RWPE1 (cell line): ENCODE measurements at regions of chr10 and their contacts with region 1.

Region 1: DNA sequence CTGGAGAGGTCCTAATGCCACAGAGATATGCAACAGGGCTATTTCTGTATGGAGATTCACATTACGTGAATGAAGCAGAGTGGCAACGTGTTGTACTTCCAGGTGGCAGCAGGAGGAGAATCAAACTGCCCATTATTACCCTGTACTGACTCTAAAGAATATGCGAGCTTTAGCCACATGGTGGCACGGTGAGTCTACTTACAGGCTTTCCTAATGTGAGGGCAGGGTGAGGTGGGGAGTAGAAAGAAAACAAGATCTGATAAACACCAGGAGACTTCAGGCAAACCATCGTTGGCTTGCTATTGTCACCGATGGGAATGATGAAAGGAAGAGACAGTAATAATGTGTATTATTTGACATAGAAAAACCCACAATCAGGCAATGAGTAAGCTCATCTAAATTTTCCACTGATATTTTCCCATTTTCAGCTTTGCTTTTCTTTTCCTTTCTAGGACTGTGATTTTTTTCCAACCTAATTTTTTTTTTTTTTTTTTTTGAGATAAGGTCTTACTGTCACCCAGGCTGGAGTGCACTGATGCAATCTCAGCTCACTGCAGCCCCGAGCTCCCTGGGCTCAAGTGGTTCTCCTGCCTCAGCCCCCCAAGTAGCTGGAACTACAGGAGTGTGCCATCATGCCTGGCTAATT is 164.3 kb downstream of the BTAF1 start:
- DNase-seq: peak; percentile 87
- H3K27ac ChIP-seq: no peak overlapping the region
- CTCF ChIP-seq: peak; percentile 87

Region 2: GRCh38 chr10:92278996-92279696 is 191.3 kb after region 1 on chr10:
- CTCF ChIA-PET with region 1: interaction called, 13 read pairs
- POLR2A ChIA-PET with region 1: no interaction called
- DNase-seq: no peak
- H3K27ac ChIP-seq: no peak overlapping the region
- CTCF ChIP-seq: no peak

Region 3: DNA sequence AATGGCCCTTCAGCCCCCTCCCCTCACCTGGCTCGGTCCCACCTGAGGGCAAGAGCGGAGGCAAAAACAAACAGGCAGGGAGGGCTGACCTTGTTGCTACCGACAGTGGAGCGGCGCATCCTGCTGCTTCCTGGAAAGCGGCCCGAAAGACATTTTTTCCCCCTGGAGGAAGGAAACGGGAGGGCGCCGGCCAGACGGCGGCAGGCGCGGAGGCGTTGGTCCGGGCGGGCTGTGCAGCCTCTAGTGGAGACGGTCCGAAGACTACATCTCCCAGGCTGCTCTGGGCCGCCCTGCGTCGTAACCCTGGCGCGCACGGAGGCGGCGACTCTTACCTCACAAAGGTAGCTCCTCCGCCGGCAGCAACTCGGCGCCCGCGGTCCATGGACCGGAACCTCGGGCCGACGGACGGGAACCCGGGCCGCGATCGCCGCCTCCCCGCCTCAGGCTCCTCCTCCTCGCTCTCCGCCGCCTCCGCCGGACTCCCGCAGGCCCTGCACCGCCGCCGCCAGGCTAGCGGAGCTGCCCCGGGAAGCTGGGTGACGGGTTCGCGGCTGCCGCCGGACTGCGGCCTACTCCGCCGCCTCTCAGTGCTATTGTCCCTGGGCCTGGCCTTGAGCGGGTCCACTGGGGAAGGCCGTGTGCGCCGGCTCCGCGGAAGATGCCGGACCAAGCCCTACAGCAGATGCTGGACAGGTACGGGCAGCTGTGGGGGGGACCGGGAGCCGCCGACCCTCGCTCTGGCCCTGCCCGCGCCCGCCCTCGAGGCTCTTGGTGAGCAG is 203.2 kb after region 1 on chr10 and contains the starts of genes CPEB3 and MARCHF5:
- CTCF ChIA-PET with region 1: interaction called, 15 read pairs
- POLR2A ChIA-PET with region 1: interaction called, 6 read pairs
- DNase-seq: peak; percentile 96
- H3K27ac ChIP-seq: peak within 1 kb of the TSS; percentile 86
- CTCF ChIP-seq: peak; percentile 53

Region 4: DNA sequence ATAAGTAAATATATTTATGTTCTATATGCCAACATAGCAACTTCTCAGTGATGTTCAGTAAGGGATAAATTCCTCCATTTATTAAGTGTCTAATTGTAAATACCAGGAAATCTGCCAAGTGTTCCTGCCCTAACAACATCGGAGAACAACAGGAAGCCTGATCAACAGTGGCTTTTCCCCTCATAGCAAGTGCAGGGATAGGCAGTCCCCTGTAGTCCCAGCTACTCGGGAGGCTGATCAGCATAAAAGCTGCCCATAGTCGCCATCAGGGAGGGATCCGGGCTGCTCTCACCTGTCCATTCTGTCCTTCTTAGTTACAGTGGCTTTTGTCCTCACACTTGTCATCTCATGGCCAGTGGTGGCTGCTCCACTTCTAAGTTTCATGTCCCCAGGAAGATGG is 344.7 kb after region 1 on chr10:
- CTCF ChIA-PET with region 1: interaction called, 18 read pairs
- POLR2A ChIA-PET with region 1: no interaction called
- DNase-seq: no peak
- H3K27ac ChIP-seq: no peak overlapping the region
- CTCF ChIP-seq: no peak